ENCODE measurements at regions of chr17 and their contacts with region 1.

Region 1: DNA sequence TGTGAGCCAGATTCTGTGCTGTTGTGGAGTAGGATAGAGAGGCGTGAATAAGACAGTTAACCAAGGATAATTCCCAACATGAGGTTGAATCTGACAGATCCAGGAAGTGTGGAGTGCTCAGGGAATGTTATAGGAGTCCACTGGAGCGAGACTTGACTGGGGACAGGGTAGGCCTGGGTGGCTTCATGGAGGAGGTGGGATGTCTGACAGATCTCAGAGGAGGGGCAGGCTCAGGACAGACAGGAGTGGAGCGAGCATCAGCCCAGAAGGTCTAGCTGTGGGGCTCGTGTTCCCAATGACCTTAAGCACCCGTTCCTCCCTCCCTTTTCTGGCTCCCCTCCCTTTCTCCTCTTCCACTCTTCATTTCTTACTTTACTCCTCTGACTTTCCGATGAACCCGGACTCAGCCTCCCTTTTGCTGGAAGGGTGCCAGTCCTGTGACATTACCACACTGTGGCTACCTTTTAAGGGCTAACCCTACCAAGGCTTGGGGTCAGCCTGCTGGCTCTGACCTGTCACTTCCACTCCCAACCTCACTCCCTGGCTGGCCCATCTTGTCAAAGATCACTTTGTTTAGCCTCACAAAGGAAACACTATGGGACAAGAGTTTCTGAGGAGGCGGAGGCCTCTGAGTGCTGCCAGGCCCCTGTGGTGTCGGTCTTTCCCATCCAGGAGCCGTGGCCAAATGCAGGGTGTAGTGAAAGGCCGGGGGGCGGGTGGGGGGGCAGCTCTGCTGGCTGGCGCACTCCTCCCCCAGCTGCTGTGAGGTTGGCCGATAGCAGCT is 28.5 kb upstream of the EFCAB13 start:
- DNase-seq: no peak
- ATAC-seq: no peak
- H3K4me3 ChIP-seq: no peak overlapping the region
- H3K27ac ChIP-seq: no peak overlapping the region
- H3K4me1 ChIP-seq: peaks cover 8% of the 10 kb centered on the region
- H3K27me3 ChIP-seq: no peaks in the 10 kb centered on the region
- CTCF ChIP-seq: no peak
- POLR2A ChIP-seq: no peak
- RAD21 ChIP-seq: no peak

Region 2: DNA sequence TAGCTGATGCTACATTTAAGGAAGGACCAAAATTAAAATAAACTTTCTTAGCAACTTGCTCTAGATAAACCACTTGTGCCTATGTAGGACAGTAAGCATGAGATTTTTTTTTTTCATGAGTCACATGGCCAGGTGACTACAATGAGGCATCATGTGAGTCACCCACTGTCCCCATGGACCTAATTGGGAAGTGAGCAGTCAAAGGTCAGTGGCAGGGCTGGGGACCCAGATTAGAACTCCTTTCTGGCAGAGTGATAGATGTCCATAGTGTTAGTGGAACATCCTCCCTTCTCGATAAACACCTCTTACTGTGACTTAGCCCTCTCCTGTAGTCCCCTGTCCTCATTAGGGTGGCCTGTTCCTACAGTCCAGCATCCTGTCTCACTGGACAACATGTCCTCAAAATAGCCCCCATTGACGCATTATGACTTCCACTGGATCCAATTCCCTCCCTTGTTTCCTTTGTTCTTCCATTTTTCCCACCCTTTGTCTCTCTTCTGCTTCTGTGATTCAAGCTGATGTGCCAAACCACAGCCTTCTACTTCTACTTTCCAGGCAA is 29.2 kb before region 1 on chr17:
- CTCF ChIA-PET with region 1: no interaction called
- POLR2A ChIA-PET with region 1: no interaction called
- dilution Hi-C with region 1: no loop called
- in situ Hi-C with region 1: no loop called
- intact Hi-C with region 1: loop called (anchors 2 kb)
- DNase-seq: peak; percentile 71
- ATAC-seq: no peak
- H3K4me3 ChIP-seq: no peak overlapping the region
- H3K27ac ChIP-seq: peak overlapping the region; percentile 28; the same call in 1 of the 2 replicates
- H3K4me1 ChIP-seq: peaks cover 12% of the 10 kb centered on the region
- H3K27me3 ChIP-seq: no peaks in the 10 kb centered on the region
- CTCF ChIP-seq: no peak
- POLR2A ChIP-seq: no peak
- RAD21 ChIP-seq: no peak